Common myeloid progenitor, CD34-positive (primary cell): ENCODE measurements at regions of chr16 and their contacts with region 1.

Region 1: DNA sequence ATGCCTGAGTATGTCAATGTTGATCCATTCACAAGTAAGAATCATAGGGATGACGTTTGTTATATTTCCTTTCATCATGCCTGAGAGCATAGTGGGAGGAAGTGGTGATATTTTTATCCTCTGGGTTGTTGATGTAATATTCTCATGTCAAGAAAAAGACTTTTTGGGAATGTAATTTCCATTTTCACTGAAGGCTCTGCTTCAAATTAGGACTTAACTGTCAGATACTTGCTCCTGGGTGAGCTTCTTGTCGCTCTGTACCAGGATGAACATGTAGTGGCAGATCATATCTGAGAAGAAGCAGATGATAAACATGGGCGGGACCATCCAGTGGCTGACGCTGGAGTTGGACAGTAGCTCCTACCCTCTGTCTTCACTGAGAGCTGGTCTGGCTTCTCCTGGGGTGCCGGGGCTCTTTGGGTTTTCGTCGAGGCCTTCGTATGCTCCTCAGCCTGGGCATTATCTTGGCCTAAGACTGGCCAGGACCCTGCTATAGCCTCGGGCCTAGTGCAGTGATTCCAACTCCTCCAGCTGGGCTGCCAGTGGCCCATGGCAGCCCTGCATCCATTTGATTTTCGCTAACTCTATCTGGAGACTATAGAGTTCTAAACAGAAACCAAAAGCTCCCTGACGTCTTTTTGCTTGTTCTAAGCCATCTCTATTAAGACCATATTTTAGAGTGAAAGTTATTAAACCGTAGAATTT is 19.7 kb downstream of the CYB5B start:
- DNase-seq: peak; percentile 59 to 81 (median 75)
- H3K4me3 ChIP-seq: peak overlapping the region in 5 of 7 experiments; percentile 50 to 77 (median 61)
- H3K27ac ChIP-seq: peak overlapping the region; percentile 72 to 87
- H3K4me1 ChIP-seq: peaks cover 0 to 17% (median 10%) of the 10 kb centered on the region in 4 experiments
- H3K27me3 ChIP-seq: no peaks in the 10 kb centered on the region

Region 2: DNA sequence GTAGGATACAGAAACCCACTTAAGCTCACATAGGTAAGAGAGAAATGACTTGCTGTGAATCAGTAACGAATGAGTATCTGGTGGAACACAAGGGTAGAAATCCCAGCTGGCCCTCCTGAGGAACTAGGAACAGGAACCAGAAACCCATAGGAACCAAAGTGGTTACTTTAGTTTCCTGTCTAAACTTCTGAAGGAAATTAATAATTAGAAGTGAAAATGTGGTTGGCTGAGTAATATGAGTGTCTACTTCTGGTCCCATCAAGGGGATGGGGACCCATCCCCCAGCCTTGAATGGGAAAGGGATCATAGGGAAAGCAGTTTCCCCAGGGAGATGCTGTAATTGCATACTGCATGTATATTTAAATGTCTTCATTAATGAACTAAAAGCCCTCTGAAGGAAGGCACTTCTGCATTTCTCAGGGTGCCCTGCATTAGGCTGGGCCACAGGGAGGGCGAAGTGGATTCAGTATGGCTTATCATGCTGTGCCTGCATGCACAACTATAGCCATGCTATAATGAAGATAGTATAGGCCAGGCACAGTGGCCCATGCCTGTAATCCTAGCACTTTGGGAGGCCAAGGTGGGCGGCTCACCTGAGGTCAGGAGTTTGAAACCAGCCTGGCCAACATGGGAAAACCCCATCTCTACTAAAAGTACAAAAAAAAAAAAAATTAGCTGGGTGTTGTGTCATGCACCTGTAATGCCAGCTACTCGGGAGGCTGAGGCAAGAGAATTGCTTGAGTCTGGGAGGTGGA is 25.9 kb after region 1 on chr16:
- CTCF ChIA-PET with region 1: interaction called, 12 read pairs
- POLR2A ChIA-PET with region 1: no interaction called
- DNase-seq: peak; percentile 80 to 91 (median 88)
- H3K4me3 ChIP-seq: peak overlapping the region in 1 of 7 experiments; percentile 42
- H3K27ac ChIP-seq: no peak overlapping the region
- H3K4me1 ChIP-seq: peaks cover 16 to 54% (median 47%) of the 10 kb centered on the region in 4 experiments
- H3K27me3 ChIP-seq: no peaks in the 10 kb centered on the region